ENCODE measurements at regions of chr12 and their contacts with region 1.

Region 1: DNA sequence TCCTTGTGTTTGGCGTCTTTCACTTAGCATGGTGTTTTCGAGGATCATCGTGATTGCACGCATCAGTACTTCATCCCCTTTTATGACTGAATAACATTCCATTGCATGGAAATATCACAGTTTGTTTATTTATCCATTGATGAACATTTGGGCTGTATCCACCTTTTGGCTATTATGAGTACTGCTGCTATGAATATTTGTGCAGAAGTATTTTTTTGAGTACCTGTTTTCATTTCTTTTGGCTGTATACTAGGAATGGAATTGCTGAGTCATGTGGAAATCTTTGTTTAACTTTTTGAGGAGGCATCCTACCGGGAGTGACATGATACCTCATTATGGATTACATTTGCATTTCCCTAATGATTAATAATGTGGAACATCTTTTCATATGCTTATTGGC is 66.4 kb downstream of the WNK1 start:
- DNase-seq: no peak
- H3K4me3 ChIP-seq: no peak overlapping the region
- H3K27ac ChIP-seq: peak overlapping the region in 3 of 4 donors; percentile 4 to 46 (median 30)
- H3K4me1 ChIP-seq: peaks cover 0 to 33% (median 14%) of the 10 kb centered on the region in 4 donors
- H3K27me3 ChIP-seq: no peaks in the 10 kb centered on the region
- CTCF ChIP-seq: peak in 1 of 4 experiments; percentile 12
- EP300 ChIP-seq: no peak
- POLR2A ChIP-seq: no peak

Region 2: DNA sequence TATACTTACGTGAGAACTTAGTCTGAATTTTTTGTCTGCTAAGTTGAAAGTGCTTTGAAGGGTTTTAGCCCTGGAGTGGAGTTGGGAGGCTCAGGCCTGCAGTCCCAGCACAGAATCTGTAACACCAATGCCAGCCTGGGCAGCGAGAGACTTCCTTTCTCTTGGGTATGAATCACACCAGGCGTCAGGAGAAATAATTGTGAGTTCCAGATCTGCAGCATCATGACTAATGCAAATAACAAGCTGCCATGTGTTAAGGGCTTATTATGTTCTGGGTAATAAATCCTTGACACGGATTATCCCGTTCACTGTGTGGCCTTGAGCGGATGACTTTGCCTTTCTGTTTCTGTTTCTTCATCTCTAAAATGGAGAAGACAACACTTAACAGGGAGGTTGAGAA is 288.4 kb before region 1 on chr12:
- intact Hi-C with region 1: no loop called
- DNase-seq: no peak
- H3K4me3 ChIP-seq: no peak overlapping the region
- H3K27ac ChIP-seq: no peak overlapping the region
- H3K4me1 ChIP-seq: no peaks in the 10 kb centered on the region
- H3K27me3 ChIP-seq: no peaks in the 10 kb centered on the region
- CTCF ChIP-seq: no peak
- EP300 ChIP-seq: no peak
- POLR2A ChIP-seq: no peak

Region 3: DNA sequence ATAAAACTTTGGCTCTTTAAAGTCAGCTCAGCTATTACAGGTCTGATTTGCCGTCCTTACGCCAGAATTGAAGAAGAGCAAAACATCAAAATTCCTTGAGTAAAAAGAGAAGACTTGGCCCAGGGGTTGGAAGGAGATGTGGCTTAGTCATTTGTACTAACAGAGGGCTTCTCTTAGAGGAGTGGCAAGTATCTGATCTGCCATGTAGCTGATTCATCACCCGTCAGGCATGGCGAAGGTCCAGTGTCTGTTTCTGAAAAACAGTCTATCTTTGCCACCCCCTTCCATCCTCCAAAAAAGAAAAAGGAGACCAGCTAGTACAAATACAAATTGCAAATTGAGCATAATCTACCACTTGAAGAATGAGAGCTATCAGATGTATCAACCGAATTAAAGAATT is 38.9 kb after region 1 on chr12:
- intact Hi-C with region 1: loop called (anchors 5 kb)
- DNase-seq: no peak
- H3K4me3 ChIP-seq: no peak overlapping the region
- H3K27ac ChIP-seq: peak overlapping the region; percentile 42 to 69 (median 60)
- H3K4me1 ChIP-seq: peaks cover 0 to 47% (median 34%) of the 10 kb centered on the region in 4 donors
- H3K27me3 ChIP-seq: no peaks in the 10 kb centered on the region
- CTCF ChIP-seq: no peak
- EP300 ChIP-seq: no peak
- POLR2A ChIP-seq: no peak